MCF 10A (cell line): ENCODE measurements at regions of chrX and their contacts with region 1.

Region 1: DNA sequence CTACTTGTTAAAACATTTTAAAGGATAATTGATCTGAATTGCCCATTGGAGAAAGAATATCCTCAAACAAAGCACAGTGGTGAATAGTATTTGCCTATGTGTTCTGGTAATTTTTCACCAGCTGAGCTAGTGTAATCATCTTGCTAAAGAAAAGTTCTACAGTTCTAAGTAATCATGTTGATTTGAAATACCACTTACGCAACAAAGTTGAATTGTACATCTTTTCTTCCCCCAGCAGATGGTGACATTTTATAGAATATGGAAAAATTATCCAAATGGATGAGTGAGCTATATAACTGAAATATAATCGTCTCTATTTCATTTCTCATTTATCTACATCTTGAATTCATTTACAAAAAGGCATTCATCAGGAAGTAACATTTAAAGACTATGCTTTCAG is 9.7 kb upstream of the ZNF674 start:
- DNase-seq: no peak
- H3K4me3 Mint-ChIP-seq: no peak overlapping the region
- H3K27ac Mint-ChIP-seq: no peak overlapping the region
- H3K4me1 Mint-ChIP-seq: no peaks in the 10 kb centered on the region
- H3K27me3 Mint-ChIP-seq: peaks cover 24% of the 10 kb centered on the region
- CTCF ChIP-seq: peak; percentile 28

Region 2: GRCh38 chrX:46686003-46686645 is 131.2 kb after region 1 on chrX:
- CTCF ChIA-PET with region 1: no interaction called
- POLR2A ChIA-PET with region 1: no interaction called
- intact Hi-C with region 1: loop called (anchors 5 kb)
- DNase-seq: peak; percentile 54
- H3K4me3 Mint-ChIP-seq: no peak overlapping the region
- H3K27ac Mint-ChIP-seq: no peak overlapping the region
- H3K4me1 Mint-ChIP-seq: peaks cover 7% of the 10 kb centered on the region
- H3K27me3 Mint-ChIP-seq: peaks cover 12% of the 10 kb centered on the region
- CTCF ChIP-seq: peak; percentile 55

Region 3: DNA sequence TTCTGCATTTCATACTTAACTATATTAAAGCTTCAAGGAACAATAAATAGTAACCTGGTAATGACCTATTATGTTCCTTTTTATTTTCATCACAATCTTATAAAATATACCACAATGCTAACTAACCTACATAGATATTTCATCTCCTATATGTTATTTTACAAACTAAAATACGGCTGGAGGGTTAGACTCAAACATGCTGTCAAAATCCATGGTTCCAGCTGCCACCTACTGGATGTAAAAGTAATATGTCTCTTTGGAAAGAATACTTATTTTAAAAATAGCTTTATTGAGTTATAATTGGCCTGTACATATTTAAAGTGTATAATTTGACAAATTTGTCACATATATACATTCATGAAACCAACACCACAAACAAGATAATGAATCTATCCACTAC is 538.3 kb after region 1 on chrX:
- CTCF ChIA-PET with region 1: no interaction called
- POLR2A ChIA-PET with region 1: no interaction called
- intact Hi-C with region 1: loop called (anchors 5 kb)
- DNase-seq: peak; percentile 47
- H3K4me3 Mint-ChIP-seq: no peak overlapping the region
- H3K27ac Mint-ChIP-seq: no peak overlapping the region
- H3K4me1 Mint-ChIP-seq: no peaks in the 10 kb centered on the region
- H3K27me3 Mint-ChIP-seq: peaks cover 88% of the 10 kb centered on the region
- CTCF ChIP-seq: no peak